ENCODE measurements at regions of chr19 and their contacts with region 1.

Region 1: GRCh38 chr19:11380653-11381534 is 3.2 kb downstream of the EPOR start:
- DNase-seq: peak; percentile 99
- ATAC-seq: peak; percentile 82
- H3K4me3 ChIP-seq: peak overlapping the region; percentile 51 to 65 (median 60)
- H3K4me3 Mint-ChIP-seq: peak overlapping the region; percentile 94
- H3K27ac ChIP-seq: peak overlapping the region; percentile 87 to 93
- H3K27ac Mint-ChIP-seq: peak overlapping the region; percentile 95
- H3K4me1 ChIP-seq: peaks cover 46 to 57% of the 10 kb centered on the region in 2 donors
- H3K4me1 Mint-ChIP-seq: peaks cover 48% of the 10 kb centered on the region
- H3K27me3 ChIP-seq: peaks cover 0 to 6% (median 2%) of the 10 kb centered on the region in 4 experiments
- H3K27me3 Mint-ChIP-seq: no peaks in the 10 kb centered on the region
- CTCF ChIP-seq: peak; percentile 89

Region 2: DNA sequence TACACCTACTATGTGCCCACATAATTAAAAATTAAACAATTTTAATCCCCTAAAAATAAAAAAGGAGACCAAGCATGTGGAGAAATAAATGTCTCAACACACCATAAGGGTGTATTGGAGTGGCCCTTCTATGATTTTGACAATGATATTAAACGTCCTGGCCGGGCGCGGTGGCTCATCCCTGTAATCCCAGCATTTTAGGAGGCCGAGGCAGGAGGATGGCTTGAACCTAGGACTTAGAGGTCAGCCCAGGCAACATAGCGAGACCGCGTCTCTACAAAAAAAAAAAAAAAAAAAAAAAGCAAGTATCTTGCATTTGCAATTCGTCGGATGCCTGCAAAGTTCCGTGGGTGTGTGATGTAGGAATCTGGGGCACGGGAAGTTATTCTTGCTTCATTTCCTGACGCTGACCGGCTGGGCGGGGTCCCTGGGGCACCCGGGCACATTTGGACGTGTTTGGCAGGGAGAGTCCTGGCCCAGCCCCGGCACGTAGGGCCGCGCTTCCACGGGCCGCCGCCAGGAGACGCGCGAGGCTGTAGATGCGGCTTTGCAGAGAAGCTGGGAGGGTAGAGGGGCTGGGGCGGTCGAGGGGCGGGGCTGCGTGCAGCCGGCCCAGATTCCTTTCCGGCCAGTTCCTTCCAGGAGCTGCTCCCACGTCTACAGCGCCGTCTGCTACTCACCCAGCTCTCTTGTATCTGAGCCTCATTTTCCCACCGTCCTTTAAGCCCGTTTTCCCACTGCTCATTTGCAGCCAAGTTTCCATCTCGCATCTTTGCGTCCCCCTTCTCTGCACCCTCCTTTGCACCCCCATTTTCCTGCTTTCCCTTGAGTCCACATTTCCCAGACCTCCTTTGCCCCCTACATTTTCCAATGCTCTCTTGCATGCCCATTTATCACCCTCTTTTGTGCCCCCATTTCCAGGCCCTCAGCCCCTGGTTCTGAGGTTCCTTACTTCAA is 87.2 kb before region 1 on chr19:
- CTCF ChIA-PET with region 1: interaction called, 14 read pairs
- POLR2A ChIA-PET with region 1: no interaction called
- intact Hi-C with region 1: loop called (anchors 2 kb)
- DNase-seq: peak; percentile 82
- ATAC-seq: peak; percentile 99
- H3K4me3 ChIP-seq: no peak overlapping the region
- H3K4me3 Mint-ChIP-seq: peak overlapping the region; percentile 73
- H3K27ac ChIP-seq: no peak overlapping the region
- H3K27ac Mint-ChIP-seq: peak overlapping the region; percentile 63
- H3K4me1 ChIP-seq: peaks cover 0 to 10% of the 10 kb centered on the region in 2 donors
- H3K4me1 Mint-ChIP-seq: peaks cover 8% of the 10 kb centered on the region
- H3K27me3 ChIP-seq: peaks cover 0 to 14% (median 0%) of the 10 kb centered on the region in 4 experiments
- H3K27me3 Mint-ChIP-seq: peaks cover 24% of the 10 kb centered on the region
- CTCF ChIP-seq: peak; percentile 98

Region 3: GRCh38 chr19:11405846-11406643 is 25.2 kb after region 1 on chr19:
- CTCF ChIA-PET with region 1: interaction called, 17 read pairs
- POLR2A ChIA-PET with region 1: no interaction called
- intact Hi-C with region 1: no loop called
- DNase-seq: peak; percentile 64
- ATAC-seq: peak; percentile 60
- H3K4me3 ChIP-seq: no peak overlapping the region
- H3K4me3 Mint-ChIP-seq: no peak overlapping the region
- H3K27ac ChIP-seq: no peak overlapping the region
- H3K27ac Mint-ChIP-seq: no peak overlapping the region
- H3K4me1 ChIP-seq: peaks cover 5 to 7% of the 10 kb centered on the region in 2 donors
- H3K4me1 Mint-ChIP-seq: peaks cover 3% of the 10 kb centered on the region
- H3K27me3 ChIP-seq: peaks cover 0 to 26% (median 4%) of the 10 kb centered on the region in 4 experiments
- H3K27me3 Mint-ChIP-seq: peaks cover 7% of the 10 kb centered on the region
- CTCF ChIP-seq: peak; percentile 22

Region 4: GRCh38 chr19:11435058-11435832 is 54.4 kb after region 1 on chr19 and contains the starts of genes ODAD3 and PRKCSH:
- CTCF ChIA-PET with region 1: interaction called, 17 read pairs
- POLR2A ChIA-PET with region 1: interaction called, 5 read pairs
- intact Hi-C with region 1: loop called (anchors 1 kb)
- DNase-seq: peak; percentile 99
- ATAC-seq: peak; percentile 88
- H3K4me3 ChIP-seq: peak within 1 kb of the TSS; percentile 76 to 95 (median 80)
- H3K4me3 Mint-ChIP-seq: peak within 1 kb of the TSS; percentile 96
- H3K27ac ChIP-seq: peak within 1 kb of the TSS; percentile 70 to 92
- H3K27ac Mint-ChIP-seq: peak within 1 kb of the TSS; percentile 88
- H3K4me1 ChIP-seq: peaks cover 27 to 40% of the 10 kb centered on the region in 2 donors
- H3K4me1 Mint-ChIP-seq: peaks cover 29% of the 10 kb centered on the region
- H3K27me3 ChIP-seq: no peaks in the 10 kb centered on the region
- H3K27me3 Mint-ChIP-seq: no peaks in the 10 kb centered on the region
- CTCF ChIP-seq: peak; percentile 94
- total RNA-seq, gene ODAD3: 0.27 and 0.62 TPM in 2 replicates
- total RNA-seq, gene PRKCSH: 364 and 402 TPM in 2 replicates

Region 5: DNA sequence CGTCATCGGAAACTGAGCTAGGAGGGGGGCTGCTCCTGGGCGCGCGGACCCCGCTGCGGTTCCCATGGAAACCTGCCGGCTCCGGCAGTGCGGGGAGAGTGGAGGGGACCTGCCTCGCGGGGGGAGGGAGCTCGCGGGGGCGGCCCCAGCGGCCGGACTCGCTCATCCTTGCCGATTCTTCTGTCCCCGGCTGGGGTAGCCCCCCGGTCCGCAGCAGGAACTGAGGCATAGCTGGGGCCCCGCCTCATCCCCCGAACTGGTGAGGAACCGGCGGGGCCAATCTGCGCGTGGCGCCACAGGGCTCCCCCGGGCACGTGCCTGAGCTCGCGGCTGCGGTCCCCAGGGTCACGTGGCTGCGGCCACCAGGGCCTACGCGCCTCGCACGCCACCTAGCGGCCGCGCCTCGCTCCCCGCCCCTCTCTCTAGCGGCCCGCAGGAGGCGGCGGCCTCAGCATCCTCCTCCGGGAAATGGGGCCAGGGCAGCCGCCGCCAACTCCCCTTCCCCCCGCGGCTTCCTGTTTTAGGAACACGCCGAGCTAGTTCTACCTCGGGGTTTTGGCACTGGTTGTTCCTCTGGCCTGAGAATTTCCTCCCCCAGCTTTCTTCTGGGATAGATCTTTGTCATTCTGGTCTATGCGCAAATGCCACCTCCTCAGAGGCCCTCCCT is 101.6 kb after region 1 on chr19:
- CTCF ChIA-PET with region 1: interaction called, 38 read pairs
- POLR2A ChIA-PET with region 1: interaction called, 9 read pairs
- intact Hi-C with region 1: loop called (anchors 1 kb)
- DNase-seq: peak; percentile 93
- ATAC-seq: peak; percentile 79
- H3K4me3 ChIP-seq: peak overlapping the region in 4 of 5 experiments; percentile 20 to 48 (median 30)
- H3K4me3 Mint-ChIP-seq: peak overlapping the region; percentile 80
- H3K27ac ChIP-seq: no peak overlapping the region
- H3K27ac Mint-ChIP-seq: peak overlapping the region; percentile 80
- H3K4me1 ChIP-seq: peaks cover 37 to 42% of the 10 kb centered on the region in 2 donors
- H3K4me1 Mint-ChIP-seq: peaks cover 27% of the 10 kb centered on the region
- H3K27me3 ChIP-seq: peaks cover 0 to 46% (median 25%) of the 10 kb centered on the region in 4 experiments
- H3K27me3 Mint-ChIP-seq: peaks cover 34% of the 10 kb centered on the region
- CTCF ChIP-seq: peak; percentile 93

Region 6: GRCh38 chr19:11673608-11674041 is 292.7 kb after region 1 on chr19:
- CTCF ChIA-PET with region 1: no interaction called
- POLR2A ChIA-PET with region 1: no interaction called
- intact Hi-C with region 1: no loop called
- DNase-seq: peak; percentile 42
- ATAC-seq: no peak
- H3K4me3 ChIP-seq: peak overlapping the region in 2 of 5 experiments; percentile 15 to 33
- H3K4me3 Mint-ChIP-seq: peak overlapping the region; percentile 74
- H3K27ac ChIP-seq: no peak overlapping the region
- H3K27ac Mint-ChIP-seq: no peak overlapping the region
- H3K4me1 ChIP-seq: peaks cover 10 to 12% of the 10 kb centered on the region in 2 donors
- H3K4me1 Mint-ChIP-seq: peaks cover 5% of the 10 kb centered on the region
- H3K27me3 ChIP-seq: peaks cover 0 to 18% (median 10%) of the 10 kb centered on the region in 4 experiments
- H3K27me3 Mint-ChIP-seq: peaks cover 20% of the 10 kb centered on the region
- CTCF ChIP-seq: peak; percentile 17

Region 7: DNA sequence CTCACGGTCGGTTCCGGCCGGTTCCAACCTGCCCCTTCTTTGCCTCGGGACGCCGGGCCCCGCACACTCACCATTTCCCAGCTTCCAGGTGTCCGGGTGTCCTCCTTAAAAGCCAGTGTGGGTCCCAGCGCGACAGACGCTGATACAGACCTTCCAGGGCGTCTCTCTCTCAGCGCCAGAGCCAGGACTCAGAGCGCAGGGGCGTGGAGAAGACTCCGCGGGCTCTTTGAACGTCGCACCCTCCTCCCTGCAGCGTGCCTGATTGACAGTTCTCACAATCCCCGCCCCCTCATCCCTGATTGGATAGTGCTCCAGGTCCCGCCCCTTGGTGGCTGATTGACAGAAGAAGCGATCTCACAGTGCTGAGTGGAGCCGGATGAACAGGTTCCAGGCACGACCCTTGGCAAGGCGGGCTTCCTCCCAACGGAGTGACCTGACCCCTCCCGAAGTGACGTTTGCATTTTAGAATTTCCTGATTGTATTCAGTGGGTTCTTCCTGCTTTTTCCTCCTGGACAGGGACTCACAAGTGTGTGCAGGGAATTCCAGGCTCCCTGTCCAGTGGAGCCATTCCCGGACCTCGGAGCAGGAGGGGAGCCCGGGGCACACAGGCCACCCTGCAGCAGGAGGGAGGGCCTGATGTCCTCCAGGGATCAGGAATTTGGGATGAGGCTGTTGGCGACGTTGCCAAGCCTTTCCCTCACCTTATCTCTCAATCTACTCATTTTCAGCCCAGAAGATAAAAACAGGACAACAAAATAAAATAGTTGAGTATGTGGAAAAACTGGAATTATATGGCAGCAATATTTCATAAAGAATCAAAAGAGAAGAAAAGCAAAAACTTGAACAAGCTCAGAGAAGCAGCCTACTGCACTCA is 358.1 kb after region 1 on chr19 and contains the start of gene ZNF823:
- CTCF ChIA-PET with region 1: no interaction called
- POLR2A ChIA-PET with region 1: no interaction called
- intact Hi-C with region 1: loop called (anchors 1 kb)
- DNase-seq: peak; percentile 94
- ATAC-seq: peak; percentile 99
- H3K4me3 ChIP-seq: peak within 1 kb of the TSS; percentile 36 to 92 (median 83)
- H3K4me3 Mint-ChIP-seq: peak within 1 kb of the TSS; percentile 99
- H3K27ac ChIP-seq: peak within 1 kb of the TSS in 1 of 2 donors; percentile 38
- H3K27ac Mint-ChIP-seq: peak within 1 kb of the TSS; percentile 89
- H3K4me1 ChIP-seq: peaks cover 15 to 19% of the 10 kb centered on the region in 2 donors
- H3K4me1 Mint-ChIP-seq: peaks cover 26% of the 10 kb centered on the region
- H3K27me3 ChIP-seq: no peaks in the 10 kb centered on the region
- H3K27me3 Mint-ChIP-seq: peaks cover 5% of the 10 kb centered on the region
- CTCF ChIP-seq: no peak
- total RNA-seq, gene ZNF823: 4.2 and 5.1 TPM in 2 replicates